Panc1 (cell line): ENCODE measurements at regions of chr19 and their contacts with region 1.

Region 1: DNA sequence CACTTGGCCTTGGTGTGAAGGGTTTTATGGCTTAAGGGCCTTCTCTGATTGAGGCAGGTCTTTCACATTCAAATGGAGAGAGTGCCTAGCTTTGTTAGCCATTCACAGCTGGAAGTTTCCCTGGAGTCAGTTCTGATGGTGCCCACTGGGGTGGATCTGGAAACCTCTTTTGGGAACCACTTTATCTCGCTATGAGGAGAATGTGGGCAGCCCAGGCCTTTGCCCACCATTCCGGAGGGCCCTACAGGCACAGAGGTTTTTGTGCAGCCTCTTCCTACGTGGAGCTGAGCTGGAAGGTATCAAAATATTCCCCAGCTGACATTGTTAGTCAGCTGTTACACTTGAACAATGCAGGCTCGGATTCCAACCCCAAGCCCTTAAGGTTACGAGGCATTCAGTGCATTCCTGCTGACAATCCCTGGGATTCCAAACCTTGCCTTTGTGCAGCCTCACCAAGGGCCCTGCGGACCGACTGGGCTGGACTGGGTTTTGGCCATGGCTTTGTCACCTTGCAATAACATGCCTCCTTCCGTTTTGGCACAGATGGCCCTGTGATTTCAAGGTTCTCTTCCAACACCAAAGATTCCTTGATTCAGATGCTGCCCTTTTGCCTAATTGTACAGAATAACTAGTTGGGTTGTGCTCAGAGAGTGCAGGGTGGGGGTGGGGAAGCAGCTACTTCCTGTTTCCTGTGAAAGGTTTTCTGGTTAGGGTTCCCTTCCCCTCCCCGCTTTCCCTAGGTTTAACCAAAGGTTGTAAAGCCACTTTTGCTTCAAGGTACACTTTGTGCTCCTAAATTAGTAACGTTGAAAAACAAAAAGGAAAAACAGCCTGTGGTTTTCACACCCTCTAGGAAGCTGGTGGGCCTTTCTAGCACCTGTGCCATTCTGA is 27.0 kb downstream of the SAE1 start:
- DNase-seq: no peak
- ATAC-seq: peak; percentile 70
- H3K4me3 ChIP-seq: no peak overlapping the region
- H3K27ac ChIP-seq: peak overlapping the region; percentile 60
- H3K4me1 ChIP-seq: peaks cover 14% of the 10 kb centered on the region
- H3K27me3 ChIP-seq: no peaks in the 10 kb centered on the region
- CTCF ChIP-seq: no peak

Region 2: GRCh38 chr19:47225746-47226425 is 68.2 kb after region 1 on chr19:
- CTCF ChIA-PET with region 1: no interaction called
- POLR2A ChIA-PET with region 1: no interaction called
- in situ Hi-C with region 1: no loop called
- intact Hi-C with region 1: no loop called
- DNase-seq: no peak
- ATAC-seq: peak; percentile 62
- H3K4me3 ChIP-seq: peak overlapping the region; percentile 23 to 65; a peak in 3 of 4 replicates
- H3K27ac ChIP-seq: peak overlapping the region; percentile 95
- H3K4me1 ChIP-seq: peaks cover 16% of the 10 kb centered on the region
- H3K27me3 ChIP-seq: no peaks in the 10 kb centered on the region
- CTCF ChIP-seq: no peak; the same call in 1 of the 2 replicates

Region 3: GRCh38 chr19:47343194-47343802 is 185.6 kb after region 1 on chr19:
- CTCF ChIA-PET with region 1: interaction called, 14 read pairs
- POLR2A ChIA-PET with region 1: no interaction called
- in situ Hi-C with region 1: no loop called
- intact Hi-C with region 1: no loop called
- DNase-seq: no peak
- ATAC-seq: no peak
- H3K4me3 ChIP-seq: no peak overlapping the region
- H3K27ac ChIP-seq: no peak overlapping the region
- H3K4me1 ChIP-seq: no peaks in the 10 kb centered on the region
- H3K27me3 ChIP-seq: no peaks in the 10 kb centered on the region
- CTCF ChIP-seq: no peak

Region 4: GRCh38 chr19:47381653-47382279 is 224.1 kb after region 1 on chr19:
- CTCF ChIA-PET with region 1: no interaction called
- POLR2A ChIA-PET with region 1: no interaction called
- in situ Hi-C with region 1: no loop called
- intact Hi-C with region 1: no loop called
- DNase-seq: no peak
- ATAC-seq: no peak
- H3K4me3 ChIP-seq: no peak overlapping the region
- H3K27ac ChIP-seq: no peak overlapping the region
- H3K4me1 ChIP-seq: no peaks in the 10 kb centered on the region
- H3K27me3 ChIP-seq: no peaks in the 10 kb centered on the region
- CTCF ChIP-seq: no peak